ENCODE measurements at regions of chr19 and their contacts with region 1.

Region 1: GRCh38 chr19:6801485-6802086 is 29.1 kb downstream of the VAV1 start:
- DNase-seq: peak; percentile 95
- ATAC-seq: peak; percentile 74
- H3K4me3 ChIP-seq: peak overlapping the region; percentile 32 to 68 (median 61)
- H3K4me3 Mint-ChIP-seq: peak overlapping the region; percentile 95
- H3K27ac ChIP-seq: peak overlapping the region; percentile 75 to 83
- H3K27ac Mint-ChIP-seq: peak overlapping the region; percentile 98
- H3K4me1 ChIP-seq: peaks cover 44 to 83% of the 10 kb centered on the region in 2 donors
- H3K4me1 Mint-ChIP-seq: peaks cover 68% of the 10 kb centered on the region
- H3K27me3 ChIP-seq: no peaks in the 10 kb centered on the region
- H3K27me3 Mint-ChIP-seq: no peaks in the 10 kb centered on the region
- CTCF ChIP-seq: no peak

Region 2: DNA sequence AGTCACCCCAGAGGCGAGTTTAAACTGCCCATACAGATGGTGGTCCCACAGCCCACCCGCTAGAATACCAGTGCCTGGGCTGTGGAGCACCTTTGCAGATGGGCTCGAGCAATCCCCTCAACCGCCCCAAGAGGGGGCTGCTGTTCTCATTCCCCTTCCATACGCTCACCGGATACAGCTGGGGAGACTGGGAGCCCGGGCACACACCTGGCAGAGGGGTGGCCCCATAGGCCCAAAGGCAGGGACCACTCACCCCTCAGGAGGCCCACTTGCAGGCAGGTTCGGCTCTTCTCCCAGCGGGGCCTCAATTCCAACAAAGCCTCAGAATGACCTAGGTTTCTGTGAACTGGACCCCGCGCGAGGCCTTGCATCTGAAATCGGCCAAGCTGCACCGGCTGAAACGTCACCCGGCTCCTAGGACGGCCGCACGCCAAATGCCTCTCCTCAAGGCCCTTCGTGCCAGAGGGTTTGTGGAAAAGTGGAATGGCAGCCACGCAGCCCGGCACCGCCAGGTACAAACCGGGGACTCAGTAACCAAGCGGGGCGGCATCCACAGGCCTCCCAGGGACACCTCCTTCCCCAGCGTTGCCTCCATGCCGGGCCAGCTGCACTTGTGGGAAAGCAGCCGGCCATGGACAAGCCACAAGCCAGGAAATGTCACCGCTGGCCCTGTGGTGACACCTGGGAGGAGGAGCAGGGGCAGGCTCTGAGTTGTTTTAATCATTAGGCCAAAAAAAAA is 540.5 kb before region 1 on chr19:
- CTCF ChIA-PET with region 1: no interaction called
- POLR2A ChIA-PET with region 1: no interaction called
- intact Hi-C with region 1: no loop called
- DNase-seq: peak; percentile 35
- ATAC-seq: no peak
- H3K4me3 ChIP-seq: no peak overlapping the region
- H3K4me3 Mint-ChIP-seq: no peak overlapping the region
- H3K27ac ChIP-seq: no peak overlapping the region
- H3K27ac Mint-ChIP-seq: no peak overlapping the region
- H3K4me1 ChIP-seq: peaks cover 10 to 16% of the 10 kb centered on the region in 2 donors
- H3K4me1 Mint-ChIP-seq: peaks cover 24% of the 10 kb centered on the region
- H3K27me3 ChIP-seq: no peaks in the 10 kb centered on the region
- H3K27me3 Mint-ChIP-seq: no peaks in the 10 kb centered on the region
- CTCF ChIP-seq: peak; percentile 48

Region 3: GRCh38 chr19:6489278-6490061 is 312.1 kb before region 1 on chr19:
- CTCF ChIA-PET with region 1: no interaction called
- POLR2A ChIA-PET with region 1: interaction called, 11 read pairs
- intact Hi-C with region 1: no loop called
- DNase-seq: peak; percentile 54
- ATAC-seq: peak; percentile 93
- H3K4me3 ChIP-seq: peak overlapping the region in 4 of 5 experiments; percentile 32 to 64 (median 43)
- H3K4me3 Mint-ChIP-seq: peak overlapping the region; percentile 91
- H3K27ac ChIP-seq: peak overlapping the region; percentile 11 to 16
- H3K27ac Mint-ChIP-seq: peak overlapping the region; percentile 90
- H3K4me1 ChIP-seq: peaks cover 0 to 12% of the 10 kb centered on the region in 2 donors
- H3K4me1 Mint-ChIP-seq: peaks cover 12% of the 10 kb centered on the region
- H3K27me3 ChIP-seq: no peaks in the 10 kb centered on the region
- H3K27me3 Mint-ChIP-seq: no peaks in the 10 kb centered on the region
- CTCF ChIP-seq: no peak

Region 4: DNA sequence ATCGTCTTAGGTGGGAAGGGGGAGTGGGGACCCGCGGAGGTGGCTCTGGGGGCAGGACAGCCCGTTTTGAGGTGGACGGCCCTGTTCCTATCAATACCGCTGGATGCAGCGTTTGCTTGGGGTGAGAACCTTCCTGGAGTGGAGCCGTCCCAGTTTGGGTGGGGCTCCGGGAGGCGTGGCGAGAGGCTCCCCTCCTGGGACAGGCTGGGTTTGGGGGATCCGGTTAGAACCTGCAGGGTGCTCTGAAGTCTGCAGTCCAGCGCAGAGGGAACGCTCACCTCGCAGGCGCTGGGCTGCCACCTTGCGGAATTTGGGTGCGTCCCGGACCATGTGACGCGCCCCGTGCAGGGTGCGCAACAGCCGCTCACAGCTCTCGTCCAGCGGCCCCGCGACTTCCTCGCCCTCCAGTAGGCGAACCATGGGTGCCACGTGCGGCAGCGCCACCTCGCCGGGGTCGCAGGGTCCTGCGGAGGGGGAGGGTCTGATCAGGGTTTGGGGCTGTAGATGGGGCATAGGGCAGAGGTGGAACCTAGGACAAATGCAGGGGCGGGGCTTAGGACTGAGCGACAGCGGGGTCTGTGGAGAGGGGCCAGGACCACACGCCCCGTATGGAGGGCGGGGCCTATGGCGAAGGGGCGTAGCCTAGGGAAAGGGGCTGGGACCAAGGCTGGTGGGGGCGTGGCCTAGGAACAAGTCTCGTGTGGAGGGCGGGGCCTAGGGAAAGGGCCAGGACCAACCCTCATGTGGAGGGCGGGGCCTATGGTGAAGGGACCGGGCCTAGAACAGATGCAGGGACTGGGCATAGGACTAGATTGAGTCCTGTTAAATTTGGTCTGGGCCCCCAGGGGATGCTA is 48.2 kb before region 1 on chr19:
- CTCF ChIA-PET with region 1: interaction called, 8 read pairs
- POLR2A ChIA-PET with region 1: interaction called, 3 read pairs
- intact Hi-C with region 1: loop called (anchors 1 kb)
- DNase-seq: peak; percentile 92
- ATAC-seq: peak; percentile 91
- H3K4me3 ChIP-seq: peak overlapping the region in 4 of 5 experiments; percentile 41 to 65 (median 58)
- H3K4me3 Mint-ChIP-seq: peak overlapping the region; percentile 94
- H3K27ac ChIP-seq: peak overlapping the region in 1 of 2 donors; percentile 35
- H3K27ac Mint-ChIP-seq: peak overlapping the region; percentile 96
- H3K4me1 ChIP-seq: peaks cover 14 to 29% of the 10 kb centered on the region in 2 donors
- H3K4me1 Mint-ChIP-seq: peaks cover 26% of the 10 kb centered on the region
- H3K27me3 ChIP-seq: no peaks in the 10 kb centered on the region
- H3K27me3 Mint-ChIP-seq: no peaks in the 10 kb centered on the region
- CTCF ChIP-seq: peak; percentile 68

Region 5: GRCh38 chr19:6767357-6768235 is 34.0 kb before region 1 on chr19 and contains the start of gene SH2D3A:
- CTCF ChIA-PET with region 1: interaction called, 57 read pairs
- POLR2A ChIA-PET with region 1: interaction called, 73 read pairs
- intact Hi-C with region 1: loop called (anchors 1 kb)
- DNase-seq: peak; percentile 98
- ATAC-seq: peak; percentile 69
- H3K4me3 ChIP-seq: peak within 1 kb of the TSS; percentile 36 to 81 (median 68)
- H3K4me3 Mint-ChIP-seq: peak within 1 kb of the TSS; percentile 93
- H3K27ac ChIP-seq: peak within 1 kb of the TSS; percentile 89 to 96
- H3K27ac Mint-ChIP-seq: peak within 1 kb of the TSS; percentile 95
- H3K4me1 ChIP-seq: peaks cover 28 to 46% of the 10 kb centered on the region in 2 donors
- H3K4me1 Mint-ChIP-seq: peaks cover 47% of the 10 kb centered on the region
- H3K27me3 ChIP-seq: no peaks in the 10 kb centered on the region
- H3K27me3 Mint-ChIP-seq: no peaks in the 10 kb centered on the region
- CTCF ChIP-seq: no peak
- total RNA-seq, gene SH2D3A: 33.5 and 36.1 TPM in 2 replicates